K562 (cell line): ENCODE measurements at regions of chr3 and their contacts with region 1.

Region 1: DNA sequence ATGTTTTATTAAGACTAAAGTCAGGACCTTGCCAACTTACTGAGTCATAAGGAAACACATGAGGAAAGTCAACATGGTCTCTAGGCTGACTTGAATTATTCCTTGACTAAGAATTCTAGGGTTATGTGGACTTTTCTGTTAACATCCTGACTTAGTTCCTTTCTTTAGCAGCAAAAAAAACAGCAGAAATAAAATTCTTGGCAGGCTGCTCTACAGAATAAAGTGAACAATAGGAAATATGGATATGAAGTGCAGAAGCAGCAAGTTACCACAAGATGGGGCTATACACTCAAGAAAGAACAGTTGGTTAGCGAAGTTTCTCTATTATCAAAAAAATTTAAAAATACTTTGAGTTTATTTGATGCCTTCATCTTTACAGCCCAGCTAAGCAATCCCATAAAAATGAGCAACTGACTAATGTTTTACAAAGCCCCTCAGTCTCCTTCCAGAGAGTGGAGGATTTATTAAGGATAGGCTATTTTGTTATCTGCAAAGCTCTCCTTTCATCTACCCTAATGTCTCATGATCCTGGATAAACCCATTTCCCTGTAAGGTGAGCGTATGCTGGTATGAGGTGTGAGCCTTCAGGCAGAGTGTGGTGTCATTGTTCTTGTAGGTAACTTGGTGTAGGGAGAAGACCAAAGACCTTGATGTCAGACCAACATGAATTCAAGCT is 23.1 kb upstream of the MCCC1 start:
- DNase-seq: peak; percentile 54 to 67 (median 56)
- ATAC-seq: peak; percentile 73
- H3K4me3 ChIP-seq: no peak overlapping the region
- H3K27ac ChIP-seq: no peak overlapping the region
- H3K4me1 ChIP-seq: no peaks in the 10 kb centered on the region
- H3K27me3 ChIP-seq: peaks cover 0 to 5% of the 10 kb centered on the region in 2 experiments; a peak in 1 of 5 replicates
- CTCF ChIP-seq: peak; percentile 65 to 91 (median 69); a peak in 5 of 6 replicates
- EP300 ChIP-seq: no peak
- POLR2A ChIP-seq: no peak
- RAD21 ChIP-seq: peak; percentile 93

Region 2: GRCh38 chr3:183178629-183179549 is 56.5 kb after region 1 on chr3:
- CTCF ChIA-PET with region 1: interaction called, 12 read pairs
- POLR2A ChIA-PET with region 1: no interaction called
- in situ Hi-C with region 1: no loop called
- intact Hi-C with region 1: loop called (anchors 1 kb)
- DNase-seq: peak; percentile 65 to 69 (median 68)
- ATAC-seq: peak; percentile 92
- H3K4me3 ChIP-seq: peak overlapping the region; percentile 50
- H3K27ac ChIP-seq: no peak overlapping the region
- H3K4me1 ChIP-seq: peaks cover 0 to 25% of the 10 kb centered on the region in 2 experiments; a peak in 2 of 5 replicates
- H3K27me3 ChIP-seq: peaks cover 0 to 29% of the 10 kb centered on the region in 2 experiments; a peak in 3 of 5 replicates
- CTCF ChIP-seq: peak; percentile 55 to 90 (median 62); a peak in 5 of 6 replicates
- EP300 ChIP-seq: no peak
- POLR2A ChIP-seq: no peak
- RAD21 ChIP-seq: peak; percentile 47 to 58

Region 3: DNA sequence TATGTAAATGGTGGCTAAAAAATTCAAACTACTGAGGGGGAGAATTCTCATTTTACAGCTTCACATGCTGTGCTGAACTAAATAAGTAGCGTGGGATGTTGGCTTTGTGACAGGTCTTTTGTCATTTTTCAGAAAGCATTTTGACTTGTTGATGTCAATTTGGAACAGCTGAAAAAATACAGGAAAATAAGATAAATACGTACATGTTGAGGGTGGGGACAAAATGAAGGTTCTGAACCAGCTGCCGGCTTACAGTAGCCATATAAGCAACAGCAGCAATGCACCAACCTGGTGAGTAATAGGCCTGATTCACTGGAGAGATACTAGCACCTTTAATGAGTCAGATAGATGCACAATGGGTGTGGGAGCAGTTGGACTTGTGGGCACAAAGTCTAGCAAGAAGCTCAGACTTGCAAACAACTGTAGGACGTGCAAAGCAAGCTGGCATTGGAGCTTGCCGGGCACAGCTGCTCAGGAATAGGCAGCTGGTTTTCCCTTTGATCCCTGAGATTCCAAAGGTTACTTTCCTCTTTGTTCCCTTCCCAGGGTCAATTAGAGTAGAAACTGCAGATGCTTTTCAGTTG is 143.5 kb after region 1 on chr3:
- CTCF ChIA-PET with region 1: no interaction called
- POLR2A ChIA-PET with region 1: no interaction called
- in situ Hi-C with region 1: no loop called
- intact Hi-C with region 1: no loop called
- DNase-seq: no peak
- ATAC-seq: no peak
- H3K4me3 ChIP-seq: no peak overlapping the region
- H3K27ac ChIP-seq: no peak overlapping the region
- H3K4me1 ChIP-seq: peaks cover 0 to 13% of the 10 kb centered on the region in 2 experiments; a peak in 4 of 5 replicates
- H3K27me3 ChIP-seq: no peaks in the 10 kb centered on the region
- CTCF ChIP-seq: no peak
- EP300 ChIP-seq: no peak
- POLR2A ChIP-seq: no peak
- RAD21 ChIP-seq: no peak

Region 4: DNA sequence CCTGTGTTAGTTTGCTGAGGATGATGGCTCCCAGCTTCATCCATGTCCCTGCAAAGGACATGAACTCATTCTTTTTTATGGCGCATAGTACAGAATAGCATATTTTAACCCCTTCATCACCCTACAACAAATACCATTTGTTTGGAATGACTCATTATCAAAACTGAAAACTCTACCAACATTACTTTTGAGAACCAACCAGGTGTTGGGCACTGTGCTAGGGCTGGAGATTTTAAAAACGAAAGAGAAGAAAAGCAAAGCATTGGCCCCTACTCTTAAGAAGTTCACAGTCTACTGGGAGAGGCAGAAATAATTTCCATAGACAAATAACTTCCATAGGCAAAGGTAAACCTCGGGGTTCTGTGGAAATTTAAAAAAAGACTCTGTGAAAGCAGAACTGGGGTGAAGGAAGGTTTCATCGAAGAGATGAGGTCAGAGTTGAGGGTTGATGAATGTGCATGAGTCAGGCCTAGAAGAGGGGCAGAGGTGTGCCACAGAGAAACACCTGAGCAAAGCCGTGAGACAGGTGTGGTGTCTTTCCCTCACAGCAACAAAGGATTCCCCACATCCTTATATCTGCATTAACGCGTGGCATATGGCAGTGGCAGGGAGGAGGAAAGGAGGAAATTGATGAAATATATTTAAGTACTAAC is 255.0 kb after region 1 on chr3:
- CTCF ChIA-PET with region 1: interaction called, 48 read pairs
- POLR2A ChIA-PET with region 1: no interaction called
- in situ Hi-C with region 1: no loop called
- intact Hi-C with region 1: loop called (anchors 1 kb)
- DNase-seq: no peak
- ATAC-seq: no peak
- H3K4me3 ChIP-seq: no peak overlapping the region
- H3K27ac ChIP-seq: no peak overlapping the region
- H3K4me1 ChIP-seq: peaks cover 4 to 14% of the 10 kb centered on the region in 2 experiments
- H3K27me3 ChIP-seq: no peaks in the 10 kb centered on the region
- CTCF ChIP-seq: no peak
- EP300 ChIP-seq: no peak
- POLR2A ChIP-seq: no peak
- RAD21 ChIP-seq: no peak

Region 5: DNA sequence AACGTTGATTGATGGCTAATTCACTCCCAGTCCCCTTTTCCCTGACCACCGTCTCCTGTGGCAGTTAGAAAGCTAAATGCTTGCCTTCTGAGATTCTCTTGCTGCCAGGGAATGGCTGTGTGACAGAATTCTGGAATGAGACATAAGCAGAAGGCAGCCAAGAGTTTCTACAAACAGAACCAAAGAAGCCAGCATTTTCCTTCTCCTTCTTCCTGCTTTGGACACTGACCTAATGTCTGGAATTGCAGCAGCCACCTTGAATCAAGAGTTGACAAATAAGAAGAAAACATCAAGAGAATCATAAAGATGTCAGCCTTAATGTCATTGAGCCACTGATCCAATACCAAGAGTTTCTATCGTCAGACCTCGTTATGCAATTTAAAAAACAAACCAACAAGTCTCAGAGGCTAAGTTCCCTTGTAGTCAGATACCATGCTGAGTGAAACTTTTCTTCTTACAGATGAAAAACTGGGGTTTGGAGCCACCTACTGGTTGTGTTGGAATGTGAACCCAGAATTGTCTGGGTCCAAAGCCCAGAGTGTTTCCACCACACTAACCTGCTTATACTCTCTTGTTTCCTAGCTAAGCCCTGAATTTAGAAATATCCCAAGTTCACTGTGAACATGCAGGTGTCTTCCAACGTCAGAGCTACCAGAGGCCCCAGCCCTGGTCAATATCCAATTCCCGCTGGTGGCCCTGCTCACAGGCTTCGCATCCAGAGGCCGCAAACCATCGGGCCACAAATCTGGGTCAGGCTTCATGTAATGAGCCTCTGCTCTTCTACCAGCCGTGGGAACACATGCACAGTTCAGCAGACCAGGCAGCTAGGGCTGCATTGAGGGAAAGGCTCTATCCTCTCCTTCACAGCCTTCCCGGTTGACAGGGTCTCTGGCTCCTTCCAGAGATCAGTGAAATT is 263.6 kb after region 1 on chr3:
- CTCF ChIA-PET with region 1: interaction called, 48 read pairs
- POLR2A ChIA-PET with region 1: no interaction called
- in situ Hi-C with region 1: loop called (anchors 5 kb)
- intact Hi-C with region 1: loop called (anchors 1 kb)
- DNase-seq: peak; percentile 59 to 79 (median 60)
- ATAC-seq: peak; percentile 89
- H3K4me3 ChIP-seq: no peak overlapping the region
- H3K27ac ChIP-seq: no peak overlapping the region
- H3K4me1 ChIP-seq: peaks cover 0 to 3% of the 10 kb centered on the region in 2 experiments; a peak in 3 of 5 replicates
- H3K27me3 ChIP-seq: no peaks in the 10 kb centered on the region
- CTCF ChIP-seq: peak; percentile 75 to 85 (median 75)
- EP300 ChIP-seq: no peak
- POLR2A ChIP-seq: no peak
- RAD21 ChIP-seq: peak; percentile 88 to 92

Region 6: DNA sequence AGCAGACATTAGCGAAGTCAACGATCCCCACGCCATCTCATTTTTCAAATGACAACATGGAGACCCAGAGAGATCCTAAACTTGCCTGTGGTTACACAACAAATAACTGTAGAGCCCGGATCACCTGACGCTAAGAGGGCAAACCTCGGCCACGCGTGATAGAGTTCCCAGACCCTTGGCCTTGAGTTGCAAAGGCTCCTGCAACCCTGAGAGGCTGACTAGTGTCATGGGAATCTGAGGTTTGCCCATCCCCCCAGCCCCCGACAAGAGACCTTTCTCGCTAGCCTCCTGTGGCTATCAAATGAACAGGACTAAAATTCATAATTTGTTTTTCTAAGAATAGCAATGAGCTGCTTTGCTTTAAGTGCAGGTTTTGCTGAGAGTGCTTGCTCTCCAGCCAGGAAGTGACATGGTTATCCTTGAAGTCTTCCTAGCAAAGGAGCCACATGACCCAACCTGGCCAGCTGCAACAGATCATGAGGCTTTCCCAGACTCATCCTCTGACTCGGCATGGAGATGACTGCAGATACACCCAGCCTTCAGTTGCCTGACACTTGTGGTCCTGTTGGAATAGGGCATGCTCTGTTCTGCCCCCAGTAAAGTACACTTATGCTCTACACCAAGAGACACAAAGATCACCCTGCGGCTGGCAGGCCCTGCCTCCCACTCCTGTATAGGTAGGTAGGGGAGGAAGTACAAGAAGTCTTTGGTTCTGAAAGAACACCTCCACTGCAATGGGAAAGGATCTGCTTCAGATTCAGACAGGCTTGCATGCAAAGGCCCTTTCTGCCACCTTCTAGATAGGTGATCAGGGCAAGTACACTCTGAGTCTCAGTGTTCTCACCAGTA is 270.0 kb after region 1 on chr3:
- CTCF ChIA-PET with region 1: no interaction called
- POLR2A ChIA-PET with region 1: no interaction called
- in situ Hi-C with region 1: loop called (anchors 5 kb)
- intact Hi-C with region 1: no loop called
- DNase-seq: no peak
- ATAC-seq: peak; percentile 46; the same call in 2 of the 3 replicates
- H3K4me3 ChIP-seq: no peak overlapping the region
- H3K27ac ChIP-seq: no peak overlapping the region
- H3K4me1 ChIP-seq: peaks cover 0 to 14% of the 10 kb centered on the region in 2 experiments; a peak in 2 of 5 replicates
- H3K27me3 ChIP-seq: no peaks in the 10 kb centered on the region
- CTCF ChIP-seq: no peak
- EP300 ChIP-seq: no peak
- POLR2A ChIP-seq: no peak
- RAD21 ChIP-seq: no peak

Region 7: GRCh38 chr3:183481582-183481981 is 359.2 kb after region 1 on chr3:
- CTCF ChIA-PET with region 1: no interaction called
- POLR2A ChIA-PET with region 1: no interaction called
- in situ Hi-C with region 1: no loop called
- intact Hi-C with region 1: loop called (anchors 1 kb)
- DNase-seq: no peak
- ATAC-seq: no peak
- H3K4me3 ChIP-seq: no peak overlapping the region
- H3K27ac ChIP-seq: no peak overlapping the region
- H3K4me1 ChIP-seq: peaks cover 11 to 17% of the 10 kb centered on the region in 2 experiments
- H3K27me3 ChIP-seq: no peaks in the 10 kb centered on the region
- CTCF ChIP-seq: no peak
- EP300 ChIP-seq: no peak
- POLR2A ChIP-seq: no peak
- RAD21 ChIP-seq: no peak